Activated naive CD4-positive, alpha-beta T cell treated with anti-CD3 and anti-CD28 coated beads for 36 hours (primary cell): ENCODE measurements at regions of chr4 and their contacts with region 1.

Region 1: DNA sequence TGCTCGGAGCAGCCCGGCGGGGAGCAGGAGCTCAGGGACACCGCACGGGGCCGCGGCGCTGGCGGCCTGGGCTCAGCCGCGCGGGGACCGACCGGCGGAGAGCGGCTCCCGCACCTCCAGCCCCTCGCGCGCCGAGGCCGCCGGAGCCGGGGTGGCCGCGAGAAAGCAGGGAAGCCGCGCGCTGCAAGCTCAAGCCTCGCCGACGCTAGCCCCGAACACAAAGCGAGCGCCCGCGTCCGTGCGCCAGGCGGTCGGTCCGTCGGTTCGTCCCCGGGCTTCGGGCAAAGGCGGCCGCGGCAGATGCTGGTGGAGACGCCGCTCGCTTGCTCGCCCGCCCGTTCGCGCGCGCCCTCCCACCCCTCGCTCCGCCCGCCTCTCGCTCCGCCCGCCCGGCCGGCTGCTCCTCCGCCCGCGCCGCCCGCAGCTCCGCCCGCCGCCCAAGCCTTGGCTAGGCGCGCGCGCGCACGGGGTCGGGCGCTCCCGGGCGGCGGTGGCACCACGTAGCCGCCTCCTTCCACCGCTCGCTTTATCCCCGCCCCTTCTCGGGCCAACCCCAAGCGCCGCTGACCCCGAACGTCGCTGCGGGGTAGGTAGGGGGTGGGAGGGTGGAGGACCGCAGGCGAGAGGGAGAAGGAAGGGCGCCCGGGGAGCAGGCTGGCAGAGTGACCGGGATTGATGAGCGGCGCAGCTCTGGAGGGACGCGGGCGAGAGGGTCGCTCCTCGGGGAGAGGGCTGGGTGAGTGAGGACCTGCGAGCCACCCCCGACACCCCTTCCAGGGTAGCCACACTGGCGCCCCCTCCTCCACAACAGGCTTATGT is at the start of gene TSPAN5:
- DNase-seq: peak; percentile 77
- H3K4me3 Mint-ChIP-seq: peak within 1 kb of the TSS; percentile 98
- H3K27ac Mint-ChIP-seq: peak within 1 kb of the TSS; percentile 71
- H3K4me1 Mint-ChIP-seq: peaks cover 74% of the 10 kb centered on the region
- H3K27me3 Mint-ChIP-seq: no peaks in the 10 kb centered on the region
- total RNA-seq, gene TSPAN5: 12.5 to 13.1 TPM

Region 2: GRCh38 chr4:98446499-98447375 is 211.8 kb before region 1 on chr4:
- CTCF ChIA-PET with region 1: interaction called, 4 read pairs
- intact Hi-C with region 1: loop called (anchors 1 kb)
- DNase-seq: peak; percentile 72
- H3K4me3 Mint-ChIP-seq: peak overlapping the region; percentile 48
- H3K27ac Mint-ChIP-seq: peak overlapping the region; percentile 76
- H3K4me1 Mint-ChIP-seq: peaks cover 31% of the 10 kb centered on the region
- H3K27me3 Mint-ChIP-seq: no peaks in the 10 kb centered on the region

Region 3: GRCh38 chr4:98522636-98523395 is 135.7 kb before region 1 on chr4:
- CTCF ChIA-PET with region 1: no interaction called
- intact Hi-C with region 1: loop called (anchors 1 kb)
- DNase-seq: peak; percentile 35
- H3K4me3 Mint-ChIP-seq: no peak overlapping the region
- H3K27ac Mint-ChIP-seq: peak overlapping the region; percentile 14
- H3K4me1 Mint-ChIP-seq: peaks cover 49% of the 10 kb centered on the region
- H3K27me3 Mint-ChIP-seq: no peaks in the 10 kb centered on the region

Region 4: DNA sequence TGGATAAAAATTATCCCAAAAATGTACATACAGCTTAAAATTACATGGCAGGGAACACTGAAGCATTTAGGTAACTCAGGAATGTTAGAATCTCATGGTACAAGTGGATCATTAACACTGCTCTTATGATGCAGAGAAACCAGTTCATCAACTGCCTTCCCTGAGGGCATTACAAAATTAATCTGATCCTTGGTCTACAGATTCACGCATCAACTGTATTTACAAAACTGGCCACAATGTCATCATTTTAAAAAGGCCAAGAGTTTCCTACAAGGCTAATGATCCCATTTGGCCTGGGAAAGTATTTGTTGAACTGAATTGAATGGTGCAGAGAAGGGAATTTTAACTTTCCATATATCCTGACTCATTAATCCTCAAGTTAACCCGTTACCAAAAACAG is 84.7 kb before region 1 on chr4:
- CTCF ChIA-PET with region 1: no interaction called
- intact Hi-C with region 1: no loop called
- DNase-seq: no peak
- H3K4me3 Mint-ChIP-seq: no peak overlapping the region
- H3K27ac Mint-ChIP-seq: no peak overlapping the region
- H3K4me1 Mint-ChIP-seq: peaks cover 42% of the 10 kb centered on the region
- H3K27me3 Mint-ChIP-seq: no peaks in the 10 kb centered on the region

Region 5: GRCh38 chr4:98645527-98645926 is 13.0 kb before region 1 on chr4:
- CTCF ChIA-PET with region 1: interaction called, 4 read pairs
- intact Hi-C with region 1: loop called (anchors 1 kb)
- DNase-seq: no peak
- H3K4me3 Mint-ChIP-seq: no peak overlapping the region
- H3K27ac Mint-ChIP-seq: no peak overlapping the region
- H3K4me1 Mint-ChIP-seq: peaks cover 47% of the 10 kb centered on the region
- H3K27me3 Mint-ChIP-seq: no peaks in the 10 kb centered on the region

Region 6: GRCh38 chr4:98828801-98829200 is 170.3 kb after region 1 on chr4:
- CTCF ChIA-PET with region 1: no interaction called
- intact Hi-C with region 1: loop called (anchors 5 kb)
- DNase-seq: peak; percentile 57
- H3K4me3 Mint-ChIP-seq: no peak overlapping the region
- H3K27ac Mint-ChIP-seq: no peak overlapping the region
- H3K4me1 Mint-ChIP-seq: no peaks in the 10 kb centered on the region
- H3K27me3 Mint-ChIP-seq: no peaks in the 10 kb centered on the region

Region 7: DNA sequence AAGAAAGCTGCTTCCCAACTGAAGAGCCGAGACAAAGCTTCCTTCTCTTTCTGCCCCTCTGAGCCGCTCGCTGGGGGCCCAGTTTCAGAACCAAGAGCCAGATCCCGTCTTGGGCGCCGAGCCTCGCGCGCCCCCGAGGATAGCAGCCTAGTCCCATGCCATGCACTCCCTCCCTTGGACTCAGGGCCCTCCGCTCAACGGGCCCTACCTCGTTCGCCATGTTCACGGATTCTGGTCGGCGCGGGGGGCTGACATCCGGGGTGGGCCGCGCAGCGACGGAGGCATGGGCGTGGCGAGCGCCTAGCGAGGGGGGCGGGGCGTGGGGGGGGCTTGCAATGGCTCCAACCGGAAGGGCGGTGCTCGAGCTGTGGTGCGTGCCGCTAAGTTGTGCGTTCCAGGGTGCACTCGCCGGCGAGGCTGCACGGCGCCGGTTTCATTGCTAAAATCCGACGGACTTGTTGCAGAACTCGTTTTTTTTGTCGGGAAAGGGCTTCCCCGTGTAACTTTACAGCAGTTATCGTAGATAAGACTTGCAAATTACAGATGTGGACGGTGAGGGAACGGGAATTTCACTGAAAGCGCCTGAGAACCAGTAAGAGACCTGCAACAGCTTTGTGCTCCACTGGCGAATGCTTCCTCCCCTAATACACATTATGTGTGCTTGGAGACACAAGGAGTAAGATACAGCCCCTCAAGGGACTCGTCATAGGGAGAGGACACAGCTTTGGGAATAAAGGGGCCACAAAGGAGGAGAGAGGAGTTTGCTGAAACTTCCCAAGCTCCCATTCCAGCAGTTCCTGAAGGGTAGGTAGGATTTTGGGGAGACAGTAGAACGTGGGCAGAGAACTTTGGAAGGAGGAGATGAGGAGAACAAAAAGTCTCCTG is 430.2 kb after region 1 on chr4 and contains the start of gene ADH5:
- CTCF ChIA-PET with region 1: no interaction called
- intact Hi-C with region 1: loop called (anchors 1 kb)
- DNase-seq: peak; percentile 92
- H3K4me3 Mint-ChIP-seq: peak within 1 kb of the TSS; percentile 96
- H3K27ac Mint-ChIP-seq: peak within 1 kb of the TSS; percentile 95
- H3K4me1 Mint-ChIP-seq: peaks cover 32% of the 10 kb centered on the region
- H3K27me3 Mint-ChIP-seq: no peaks in the 10 kb centered on the region
- total RNA-seq, gene ADH5: 94.3 to 99.9 TPM

Region 8: GRCh38 chr4:100082852-100083251 is 1424.4 kb after region 1 on chr4:
- CTCF ChIA-PET with region 1: no interaction called
- intact Hi-C with region 1: loop called (anchors 2 kb)
- DNase-seq: peak; percentile 35
- H3K4me3 Mint-ChIP-seq: no peak overlapping the region
- H3K27ac Mint-ChIP-seq: peak overlapping the region; percentile 89
- H3K4me1 Mint-ChIP-seq: peaks cover 72% of the 10 kb centered on the region
- H3K27me3 Mint-ChIP-seq: peaks cover 2% of the 10 kb centered on the region